ENCODE measurements at regions of chr1 and their contacts with region 1.

Region 1: GRCh38 chr1:29033829-29034466 is 89.8 kb downstream of the TMEM200B start:
- DNase-seq: no peak
- ATAC-seq: peak; percentile 63
- H3K4me3 Mint-ChIP-seq: no peak overlapping the region
- H3K27ac Mint-ChIP-seq: no peak overlapping the region
- H3K4me1 Mint-ChIP-seq: no peaks in the 10 kb centered on the region
- H3K27me3 Mint-ChIP-seq: no peaks in the 10 kb centered on the region

Region 2: GRCh38 chr1:28893403-28894102 is 140.4 kb before region 1 on chr1:
- CTCF ChIA-PET with region 1: interaction called, 10 read pairs
- DNase-seq: peak; percentile 48
- ATAC-seq: no peak
- H3K4me3 Mint-ChIP-seq: no peak overlapping the region
- H3K27ac Mint-ChIP-seq: no peak overlapping the region
- H3K4me1 Mint-ChIP-seq: peaks cover 12% of the 10 kb centered on the region
- H3K27me3 Mint-ChIP-seq: no peaks in the 10 kb centered on the region